ENCODE measurements at regions of chr16 and their contacts with region 1.

Region 1: GRCh38 chr16:15507298-15507958 is 73.0 kb downstream of the BMERB1 start:
- DNase-seq: peak in 1 of 2 donors; percentile 56
- ATAC-seq: peak; percentile 66
- H3K4me3 ChIP-seq: no peak overlapping the region
- H3K27ac ChIP-seq: peak overlapping the region in 1 of 2 donors; percentile 63
- H3K4me1 ChIP-seq: peaks cover 0 to 4% of the 10 kb centered on the region in 2 donors
- H3K27me3 ChIP-seq: no peaks in the 10 kb centered on the region

Region 2: GRCh38 chr16:15434425-15435215 is 72.8 kb before region 1 on chr16 and contains the start of gene BMERB1:
- intact Hi-C with region 1: no loop called
- DNase-seq: peak; percentile 87 to 95
- ATAC-seq: peak; percentile 94
- H3K4me3 ChIP-seq: peak within 1 kb of the TSS; percentile 64 to 82
- H3K27ac ChIP-seq: peak within 1 kb of the TSS in 1 of 2 donors; percentile 55
- H3K4me1 ChIP-seq: peaks cover 0 to 4% of the 10 kb centered on the region in 2 donors
- H3K27me3 ChIP-seq: no peaks in the 10 kb centered on the region
- total RNA-seq, gene BMERB1: 71.1 TPM

Region 3: GRCh38 chr16:15548482-15548891 is 41.1 kb after region 1 on chr16:
- intact Hi-C with region 1: loop called in 1 of 2 experiments (anchors 1 kb)
- DNase-seq: no peak
- ATAC-seq: no peak
- H3K4me3 ChIP-seq: no peak overlapping the region
- H3K27ac ChIP-seq: no peak overlapping the region
- H3K4me1 ChIP-seq: peaks cover 3% of the 10 kb centered on the region in 2 donors
- H3K27me3 ChIP-seq: no peaks in the 10 kb centered on the region

Measured in aorta (tissue), 5 donors.